IMR-90 (cell line): ENCODE measurements at regions of chr11 and their contacts with region 1.

Region 1: DNA sequence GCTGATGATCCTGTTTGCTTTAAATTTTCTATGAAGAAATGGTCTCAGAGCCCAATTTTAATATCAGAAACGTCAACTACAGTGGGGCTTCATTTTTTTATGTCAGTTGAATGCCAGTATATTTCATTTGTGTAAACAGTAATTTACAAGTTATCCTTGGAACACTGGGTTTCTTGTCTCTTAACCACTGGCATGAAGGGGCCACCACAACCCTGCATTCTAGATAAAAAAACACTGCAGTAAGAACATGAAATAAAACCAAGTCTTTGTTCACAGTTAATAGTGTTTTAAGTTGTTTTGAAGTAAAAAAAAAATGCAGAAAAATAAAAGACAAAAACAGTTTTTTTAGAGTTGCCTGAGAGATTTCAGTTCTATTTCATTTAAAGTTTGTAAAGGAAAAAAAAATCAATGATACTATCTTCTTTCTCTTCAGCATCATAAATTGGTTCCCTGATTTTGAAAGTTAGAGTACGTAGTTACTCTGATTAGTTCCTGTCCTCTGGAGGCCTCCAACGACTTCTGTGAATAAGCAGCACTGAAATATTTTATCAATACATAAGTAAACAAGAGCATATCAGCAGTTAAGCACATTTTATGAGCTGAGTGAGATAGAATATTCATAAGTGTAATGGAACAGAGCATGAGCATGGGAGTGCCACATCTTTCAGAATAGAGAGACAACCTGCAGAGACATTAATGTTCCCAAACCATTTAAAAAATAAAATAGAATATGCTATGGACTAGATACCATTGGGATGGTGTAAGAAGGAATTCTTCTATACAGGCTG is 7.8 kb upstream of the DDI1 start:
- DNase-seq: peak; percentile 7
- ATAC-seq: no peak
- H3K4me3 ChIP-seq: no peak overlapping the region
- H3K27ac ChIP-seq: no peak overlapping the region
- H3K4me1 ChIP-seq: no peaks in the 10 kb centered on the region
- H3K27me3 ChIP-seq: no peaks in the 10 kb centered on the region
- CTCF ChIP-seq: no peak
- POLR2A ChIP-seq: no peak
- RAD21 ChIP-seq: no peak

Region 2: DNA sequence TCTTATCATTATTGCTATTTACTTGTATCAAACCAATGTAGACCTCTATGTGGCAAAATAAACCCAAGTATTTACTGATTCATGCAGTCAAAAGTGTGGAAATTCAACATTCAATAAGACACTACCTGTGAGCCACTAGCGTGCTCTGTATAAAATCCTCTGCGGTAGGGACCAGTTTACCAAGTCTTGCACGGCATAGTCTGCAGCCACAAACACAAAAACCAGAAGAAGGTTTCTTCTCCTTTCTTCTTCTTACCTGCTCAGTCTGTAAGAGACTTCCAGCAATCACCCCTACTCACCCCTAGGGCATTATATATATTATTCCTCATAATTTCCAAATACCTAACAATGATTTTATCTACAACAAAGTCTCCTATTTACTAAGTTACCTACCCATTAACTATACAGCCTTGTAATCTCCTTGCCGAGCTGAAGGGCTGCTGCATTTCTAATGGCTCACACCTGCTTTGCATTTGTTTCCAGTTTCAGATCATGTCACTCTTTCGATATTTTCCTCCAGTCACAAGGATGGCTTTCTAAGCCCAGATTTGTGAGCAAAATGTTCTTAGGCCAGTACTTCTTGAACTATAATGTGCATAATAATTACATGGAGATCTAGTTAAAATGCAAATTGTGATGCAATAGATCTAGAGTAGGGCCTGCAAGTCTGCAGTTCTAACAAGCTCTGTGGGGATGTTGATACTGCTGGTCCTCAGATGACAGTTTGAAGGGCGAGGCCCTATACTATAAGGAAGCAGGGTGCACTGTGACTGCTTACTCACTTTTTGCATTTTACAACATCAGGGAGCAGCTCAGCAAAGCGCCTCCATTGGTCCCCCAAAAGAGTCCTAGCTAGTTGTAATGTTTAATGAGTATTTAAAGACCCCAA is 184.1 kb before region 1 on chr11:
- CTCF ChIA-PET with region 1: no interaction called
- POLR2A ChIA-PET with region 1: no interaction called
- dilution Hi-C with region 1: no loop called
- in situ Hi-C with region 1: no loop called
- intact Hi-C with region 1: no loop called
- DNase-seq: no peak
- ATAC-seq: no peak
- H3K4me3 ChIP-seq: no peak overlapping the region
- H3K27ac ChIP-seq: no peak overlapping the region
- H3K4me1 ChIP-seq: peaks cover 2% of the 10 kb centered on the region; the same call in 1 of the 2 replicates
- H3K27me3 ChIP-seq: no peaks in the 10 kb centered on the region
- CTCF ChIP-seq: no peak
- POLR2A ChIP-seq: no peak
- RAD21 ChIP-seq: no peak

Region 3: GRCh38 chr11:104390651-104391050 is 362.0 kb after region 1 on chr11:
- CTCF ChIA-PET with region 1: no interaction called
- POLR2A ChIA-PET with region 1: no interaction called
- dilution Hi-C with region 1: no loop called
- in situ Hi-C with region 1: no loop called
- intact Hi-C with region 1: no loop called
- DNase-seq: peak; percentile 25
- ATAC-seq: no peak
- H3K4me3 ChIP-seq: no peak overlapping the region
- H3K27ac ChIP-seq: no peak overlapping the region
- H3K4me1 ChIP-seq: no peaks in the 10 kb centered on the region
- H3K27me3 ChIP-seq: no peaks in the 10 kb centered on the region
- CTCF ChIP-seq: no peak
- POLR2A ChIP-seq: no peak
- RAD21 ChIP-seq: no peak

Region 4: GRCh38 chr11:104705490-104706190 is 677.0 kb after region 1 on chr11:
- CTCF ChIA-PET with region 1: interaction called, 13 read pairs
- POLR2A ChIA-PET with region 1: no interaction called
- dilution Hi-C with region 1: no loop called
- in situ Hi-C with region 1: no loop called
- intact Hi-C with region 1: no loop called
- DNase-seq: peak; percentile 18
- ATAC-seq: peak; percentile 58
- H3K4me3 ChIP-seq: no peak overlapping the region
- H3K27ac ChIP-seq: peak overlapping the region; percentile 45; the same call in 1 of the 2 replicates
- H3K4me1 ChIP-seq: peaks cover 7% of the 10 kb centered on the region
- H3K27me3 ChIP-seq: no peaks in the 10 kb centered on the region
- CTCF ChIP-seq: no peak
- POLR2A ChIP-seq: no peak
- RAD21 ChIP-seq: no peak